ENCODE measurements at regions of chr16 and their contacts with region 1.

Region 1: GRCh38 chr16:28140788-28141618 is 70.8 kb downstream of the XPO6 start:
- DNase-seq: peak; percentile 47 to 96 (median 65)
- ATAC-seq: peak; percentile 75
- H3K4me3 ChIP-seq: peak overlapping the region; percentile 44
- H3K4me3 Mint-ChIP-seq: peak overlapping the region; percentile 65
- H3K27ac ChIP-seq: peak overlapping the region; percentile 80 to 81
- H3K27ac Mint-ChIP-seq: peak overlapping the region; percentile 97
- H3K4me1 ChIP-seq: peaks cover 84% of the 10 kb centered on the region
- H3K4me1 Mint-ChIP-seq: peaks cover 89% of the 10 kb centered on the region
- H3K27me3 ChIP-seq: no peaks in the 10 kb centered on the region
- H3K27me3 Mint-ChIP-seq: no peaks in the 10 kb centered on the region
- CTCF ChIP-seq: peak; percentile 39

Region 2: DNA sequence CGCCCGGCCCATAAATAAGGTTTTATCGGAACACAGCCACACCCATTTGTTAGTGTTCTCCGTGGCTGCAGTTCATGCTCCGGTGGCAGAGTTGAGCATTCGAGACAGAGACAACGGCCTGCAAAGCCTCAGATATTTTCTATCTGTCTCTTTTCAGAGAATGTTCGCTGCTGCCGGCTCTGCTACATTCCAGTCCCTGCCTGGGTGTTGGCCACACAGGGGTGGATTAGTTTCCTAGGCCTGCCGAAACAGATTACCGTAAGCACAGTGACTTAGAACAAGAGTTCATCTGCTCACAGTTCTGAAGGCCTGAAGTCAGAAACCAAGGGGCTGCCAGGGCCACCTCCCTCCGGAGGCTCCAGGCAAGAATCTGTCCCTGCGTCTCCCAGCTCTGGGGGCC is 58.4 kb before region 1 on chr16:
- CTCF ChIA-PET with region 1: no interaction called
- POLR2A ChIA-PET with region 1: no interaction called
- intact Hi-C with region 1: no loop called
- DNase-seq: no peak
- ATAC-seq: no peak
- H3K4me3 ChIP-seq: no peak overlapping the region
- H3K4me3 Mint-ChIP-seq: no peak overlapping the region
- H3K27ac ChIP-seq: no peak overlapping the region
- H3K27ac Mint-ChIP-seq: no peak overlapping the region
- H3K4me1 ChIP-seq: no peaks in the 10 kb centered on the region
- H3K4me1 Mint-ChIP-seq: no peaks in the 10 kb centered on the region
- H3K27me3 ChIP-seq: no peaks in the 10 kb centered on the region
- H3K27me3 Mint-ChIP-seq: no peaks in the 10 kb centered on the region
- CTCF ChIP-seq: no peak

Region 3: GRCh38 chr16:28164140-28164539 is 23.1 kb after region 1 on chr16:
- CTCF ChIA-PET with region 1: interaction called, 12 read pairs
- POLR2A ChIA-PET with region 1: interaction called, 25 read pairs
- intact Hi-C with region 1: loop called in 1 of 2 experiments (anchors 1 kb)
- DNase-seq: no peak
- ATAC-seq: no peak
- H3K4me3 ChIP-seq: no peak overlapping the region
- H3K4me3 Mint-ChIP-seq: peak overlapping the region; percentile 15
- H3K27ac ChIP-seq: peak overlapping the region in 1 of 2 donors; percentile 31
- H3K27ac Mint-ChIP-seq: peak overlapping the region; percentile 87
- H3K4me1 ChIP-seq: peaks cover 49% of the 10 kb centered on the region
- H3K4me1 Mint-ChIP-seq: peaks cover 95% of the 10 kb centered on the region
- H3K27me3 ChIP-seq: no peaks in the 10 kb centered on the region
- H3K27me3 Mint-ChIP-seq: no peaks in the 10 kb centered on the region
- CTCF ChIP-seq: no peak

Region 4: DNA sequence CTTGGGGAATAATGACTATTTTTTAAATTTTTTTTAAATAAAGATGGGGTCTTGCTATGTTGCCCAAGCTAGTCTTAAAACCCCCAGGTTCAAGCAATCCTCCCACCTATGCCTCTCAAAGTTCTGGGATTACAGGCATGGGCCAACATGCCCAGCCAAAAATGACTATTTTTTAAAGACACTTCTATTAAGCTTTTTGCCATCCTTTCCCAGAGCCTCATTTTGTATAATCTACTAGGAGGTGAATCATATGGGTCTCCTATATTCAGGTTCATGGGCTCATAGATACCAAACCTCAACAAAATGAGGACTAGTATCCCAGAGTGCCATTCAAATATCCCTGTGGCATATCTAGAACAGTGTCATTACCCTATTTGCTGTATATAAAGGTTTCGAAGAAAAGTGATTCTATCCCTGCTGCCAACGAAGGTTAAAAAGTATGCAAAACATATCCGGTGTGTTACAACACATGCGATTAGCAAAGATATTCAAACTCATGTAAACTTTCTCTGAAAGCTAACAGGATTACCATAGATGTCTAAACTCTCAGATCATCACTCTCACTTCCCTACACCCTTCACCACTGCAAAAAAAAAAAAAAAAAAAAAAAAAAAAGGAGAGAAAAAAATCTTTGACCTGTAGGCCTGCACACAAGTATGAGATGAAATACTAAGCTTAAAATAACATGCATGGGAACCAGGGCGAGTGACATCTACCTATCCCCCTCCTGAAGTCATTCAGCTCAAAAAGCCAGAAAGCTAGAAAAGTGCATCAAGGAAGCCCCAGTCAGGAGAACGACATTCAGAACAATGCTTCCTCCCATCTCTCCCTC is 47.3 kb after region 1 on chr16:
- CTCF ChIA-PET with region 1: interaction called, 19 read pairs
- POLR2A ChIA-PET with region 1: interaction called, 46 read pairs
- intact Hi-C with region 1: loop called (anchors 2 to 5 kb)
- DNase-seq: peak in 3 of 14 experiments; percentile 43 to 54 (median 44)
- ATAC-seq: no peak
- H3K4me3 ChIP-seq: no peak overlapping the region
- H3K4me3 Mint-ChIP-seq: peak overlapping the region; percentile 76
- H3K27ac ChIP-seq: peak overlapping the region; percentile 67 to 81
- H3K27ac Mint-ChIP-seq: peak overlapping the region; percentile 93
- H3K4me1 ChIP-seq: peaks cover 78% of the 10 kb centered on the region
- H3K4me1 Mint-ChIP-seq: peaks cover 93% of the 10 kb centered on the region
- H3K27me3 ChIP-seq: no peaks in the 10 kb centered on the region
- H3K27me3 Mint-ChIP-seq: no peaks in the 10 kb centered on the region
- CTCF ChIP-seq: no peak

Region 5: DNA sequence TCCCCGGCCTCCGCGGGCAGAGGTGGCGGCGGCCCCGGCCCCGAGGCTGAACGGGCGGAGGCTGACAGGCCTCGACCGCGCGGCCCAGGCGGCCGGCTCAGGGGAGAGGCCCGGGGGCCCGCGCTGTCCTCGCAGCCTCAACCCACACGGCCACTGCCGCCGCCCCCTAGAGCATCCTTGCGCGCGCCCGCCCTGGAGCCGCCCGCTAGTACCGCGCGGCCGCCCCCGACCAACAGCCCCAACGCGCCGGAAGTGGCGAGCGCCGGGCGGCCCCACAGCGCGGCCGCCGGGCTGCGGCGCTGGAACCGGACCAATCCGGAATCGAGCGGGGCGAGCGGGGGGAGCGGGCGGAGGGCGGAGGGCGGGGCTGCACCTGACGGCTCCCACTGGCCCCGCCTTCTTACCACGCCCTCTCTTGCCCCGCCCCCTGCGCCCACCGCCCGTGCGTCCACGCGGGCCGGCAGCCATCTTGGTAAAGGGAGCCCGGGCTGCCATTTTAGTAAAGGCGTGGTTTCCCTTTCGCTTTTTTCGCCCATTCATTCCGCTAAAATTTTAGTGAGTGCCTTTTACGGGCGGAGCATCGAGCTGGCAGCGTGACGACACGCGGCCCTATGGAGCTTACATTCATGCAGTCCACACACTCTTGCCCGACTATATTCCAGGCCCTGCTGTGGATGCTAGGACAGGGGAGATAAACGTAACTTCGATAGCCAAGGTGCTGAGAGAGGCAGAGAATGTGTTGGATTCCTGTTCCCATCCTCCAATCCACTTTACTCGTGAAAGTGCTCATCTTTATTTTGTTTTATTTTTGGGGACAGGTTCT is 70.9 kb after region 1 on chr16 and contains the start of gene XPO6:
- CTCF ChIA-PET with region 1: interaction called, 57 read pairs
- POLR2A ChIA-PET with region 1: interaction called, 105 read pairs
- intact Hi-C with region 1: loop called in 1 of 2 experiments (anchors 1 kb)
- DNase-seq: peak; percentile 96 to 100 (median 99)
- ATAC-seq: peak; percentile 83
- H3K4me3 ChIP-seq: peak within 1 kb of the TSS; percentile 98
- H3K4me3 Mint-ChIP-seq: peak within 1 kb of the TSS; percentile 89
- H3K27ac ChIP-seq: peak within 1 kb of the TSS; percentile 66 to 80
- H3K27ac Mint-ChIP-seq: peak within 1 kb of the TSS; percentile 81
- H3K4me1 ChIP-seq: peaks cover 35% of the 10 kb centered on the region
- H3K4me1 Mint-ChIP-seq: peaks cover 45% of the 10 kb centered on the region
- H3K27me3 ChIP-seq: no peaks in the 10 kb centered on the region
- H3K27me3 Mint-ChIP-seq: no peaks in the 10 kb centered on the region
- CTCF ChIP-seq: no peak
- total RNA-seq, gene XPO6: 378 to 390 TPM

Region 6: GRCh38 chr16:28309811-28310311 is 168.9 kb after region 1 on chr16:
- CTCF ChIA-PET with region 1: no interaction called
- POLR2A ChIA-PET with region 1: interaction called, 4 read pairs
- intact Hi-C with region 1: loop called in 1 of 2 experiments (anchors 5 kb)
- DNase-seq: peak; percentile 65 to 97 (median 85)
- ATAC-seq: peak; percentile 92
- H3K4me3 ChIP-seq: peak overlapping the region; percentile 32
- H3K4me3 Mint-ChIP-seq: peak overlapping the region; percentile 75
- H3K27ac ChIP-seq: peak overlapping the region; percentile 86 to 89
- H3K27ac Mint-ChIP-seq: peak overlapping the region; percentile 96
- H3K4me1 ChIP-seq: peaks cover 59% of the 10 kb centered on the region
- H3K4me1 Mint-ChIP-seq: peaks cover 69% of the 10 kb centered on the region
- H3K27me3 ChIP-seq: no peaks in the 10 kb centered on the region
- H3K27me3 Mint-ChIP-seq: no peaks in the 10 kb centered on the region
- CTCF ChIP-seq: no peak

Region 7: DNA sequence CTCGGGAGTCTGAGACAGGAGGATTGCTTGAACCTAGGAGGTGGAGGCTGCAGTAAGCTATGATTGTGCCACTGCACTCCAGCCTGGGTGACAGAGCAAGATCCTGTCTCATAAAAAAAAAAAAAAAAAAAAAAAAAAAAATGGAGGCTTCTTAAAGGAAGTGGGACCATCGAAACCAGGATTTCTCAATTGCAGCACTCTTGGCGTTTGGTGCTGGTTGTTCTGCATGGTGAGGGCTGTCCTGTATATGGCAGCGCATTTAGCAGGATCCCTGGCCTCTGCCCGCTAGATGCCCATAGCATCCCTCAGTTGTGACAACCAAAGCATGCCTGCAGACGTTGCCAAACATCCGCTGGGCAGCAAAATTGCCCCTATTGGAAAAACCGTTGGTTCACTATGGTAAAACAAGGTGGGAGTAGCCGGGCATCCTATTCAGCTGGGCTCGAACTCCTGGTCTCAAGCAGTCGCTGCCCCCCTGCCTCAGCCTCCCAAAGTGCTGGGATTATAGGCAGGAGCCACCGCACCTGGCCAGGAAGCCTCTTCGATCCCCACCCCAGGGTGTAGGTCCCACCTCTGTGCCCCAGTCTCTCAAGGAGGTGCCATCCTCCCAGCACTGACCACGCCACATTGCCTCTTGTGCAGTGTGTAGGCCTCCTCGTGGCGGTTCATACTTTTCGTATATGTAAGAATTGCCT is 337.6 kb after region 1 on chr16:
- CTCF ChIA-PET with region 1: no interaction called
- POLR2A ChIA-PET with region 1: no interaction called
- intact Hi-C with region 1: no loop called
- DNase-seq: no peak
- ATAC-seq: no peak
- H3K4me3 ChIP-seq: no peak overlapping the region
- H3K4me3 Mint-ChIP-seq: no peak overlapping the region
- H3K27ac ChIP-seq: no peak overlapping the region
- H3K27ac Mint-ChIP-seq: no peak overlapping the region
- H3K4me1 ChIP-seq: peaks cover 3% of the 10 kb centered on the region
- H3K4me1 Mint-ChIP-seq: peaks cover 4% of the 10 kb centered on the region
- H3K27me3 ChIP-seq: no peaks in the 10 kb centered on the region
- H3K27me3 Mint-ChIP-seq: no peaks in the 10 kb centered on the region
- CTCF ChIP-seq: no peak

Measured in CD4-positive, alpha-beta T cell (primary cell).